Sigmoid colon (tissue), 7 donors: ENCODE measurements at regions of chr21 and their contacts with region 1.

Region 1: GRCh38 chr21:45140346-45140940 is 66.1 kb downstream of the ADARB1 start:
- DNase-seq: peak; percentile 87
- H3K4me3 ChIP-seq: no peak overlapping the region
- H3K27ac ChIP-seq: peak overlapping the region in 2 of 4 donors; percentile 24 to 47
- H3K4me1 ChIP-seq: peaks cover 4 to 48% (median 26%) of the 10 kb centered on the region in 4 donors
- H3K27me3 ChIP-seq: no peaks in the 10 kb centered on the region
- CTCF ChIP-seq: peak; percentile 68 to 83 (median 76)
- EP300 ChIP-seq: no peak
- POLR2A ChIP-seq: no peak

Region 2: GRCh38 chr21:44949779-44950198 is 190.7 kb before region 1 on chr21:
- intact Hi-C with region 1: loop called (anchors 1 kb)
- DNase-seq: peak; percentile 94
- H3K4me3 ChIP-seq: no peak overlapping the region
- H3K27ac ChIP-seq: peak overlapping the region; percentile 16 to 63 (median 35)
- H3K4me1 ChIP-seq: peaks cover 0 to 35% (median 27%) of the 10 kb centered on the region in 4 donors
- H3K27me3 ChIP-seq: no peaks in the 10 kb centered on the region
- CTCF ChIP-seq: peak; percentile 94 to 98 (median 96)
- EP300 ChIP-seq: no peak
- POLR2A ChIP-seq: no peak

Region 3: GRCh38 chr21:45192332-45192731 is 51.9 kb after region 1 on chr21:
- intact Hi-C with region 1: no loop called
- DNase-seq: no peak
- H3K4me3 ChIP-seq: no peak overlapping the region
- H3K27ac ChIP-seq: no peak overlapping the region
- H3K4me1 ChIP-seq: peaks cover 0 to 8% (median 4%) of the 10 kb centered on the region in 4 donors
- H3K27me3 ChIP-seq: no peaks in the 10 kb centered on the region
- CTCF ChIP-seq: no peak
- EP300 ChIP-seq: no peak
- POLR2A ChIP-seq: no peak